Activated B cell treated with CpG ODN at 0.5 μM for 24 hours (primary cell): ENCODE measurements at regions of chr17 and their contacts with region 1.

Region 1: GRCh38 chr17:81253358-81254131 is 14.4 kb downstream of the NDUFAF8 start:
- DNase-seq: peak; percentile 35
- ATAC-seq: peak; percentile 88
- H3K4me3 Mint-ChIP-seq: no peak overlapping the region
- H3K27ac Mint-ChIP-seq: no peak overlapping the region
- H3K4me1 Mint-ChIP-seq: peaks cover 11% of the 10 kb centered on the region
- H3K27me3 Mint-ChIP-seq: no peaks in the 10 kb centered on the region
- CTCF ChIP-seq: no peak

Region 2: DNA sequence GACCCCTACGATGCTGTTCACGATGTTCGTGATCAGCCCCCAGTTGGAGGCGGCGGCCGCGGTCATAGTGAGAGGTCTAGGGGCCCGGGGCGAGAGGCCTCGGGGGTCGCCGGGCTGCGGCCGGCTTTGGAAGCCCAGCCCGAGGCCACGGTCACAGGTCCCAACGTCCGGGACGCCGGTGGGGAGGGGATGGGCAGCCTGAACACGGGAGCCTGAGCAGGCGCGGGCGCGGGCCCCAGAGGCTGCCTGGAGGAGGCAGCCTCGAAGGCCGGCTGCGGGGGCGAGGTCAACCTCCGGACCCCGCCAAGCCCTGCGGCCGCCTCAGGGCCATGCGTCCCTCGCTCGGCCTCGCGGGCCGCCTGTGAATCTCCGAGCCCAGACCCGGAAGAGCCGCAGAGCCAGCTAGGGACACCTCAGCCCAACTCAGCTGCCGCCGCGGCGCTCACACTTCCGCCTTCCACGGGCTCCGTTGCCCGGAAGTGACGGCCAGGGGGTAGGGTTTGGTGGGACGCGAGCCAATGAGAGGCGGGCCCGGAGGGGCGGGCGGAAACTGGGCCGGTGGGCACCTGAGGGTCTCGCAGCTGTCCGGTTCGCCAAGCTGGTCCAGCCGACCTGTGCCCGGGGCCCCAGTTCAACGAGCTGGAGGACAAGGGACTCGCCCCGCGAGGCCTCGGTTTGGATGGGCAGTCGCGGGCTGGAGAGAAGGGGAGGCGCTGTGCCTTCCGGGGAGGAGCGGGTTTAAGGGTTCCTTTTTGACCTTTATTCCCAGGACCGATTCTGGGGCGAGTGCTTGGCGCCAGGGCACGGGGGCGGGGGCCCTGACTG is 41.5 kb after region 1 on chr17 and contains the start of gene SLC38A10:
- CTCF ChIA-PET with region 1: interaction called, 3 read pairs
- POLR2A ChIA-PET with region 1: no interaction called
- intact Hi-C with region 1: loop called (anchors 2 kb)
- DNase-seq: peak; percentile 92
- ATAC-seq: peak; percentile 86
- H3K4me3 Mint-ChIP-seq: peak within 1 kb of the TSS; percentile 95
- H3K27ac Mint-ChIP-seq: peak within 1 kb of the TSS; percentile 92
- H3K4me1 Mint-ChIP-seq: peaks cover 39% of the 10 kb centered on the region
- H3K27me3 Mint-ChIP-seq: no peaks in the 10 kb centered on the region
- CTCF ChIP-seq: no peak
- total RNA-seq, gene SLC38A10: 75.9 and 97.1 TPM in 2 replicates

Region 3: GRCh38 chr17:81387100-81388090 is 133.8 kb after region 1 on chr17:
- CTCF ChIA-PET with region 1: no interaction called
- POLR2A ChIA-PET with region 1: no interaction called
- intact Hi-C with region 1: loop called (anchors 5 kb)
- DNase-seq: peak; percentile 39
- ATAC-seq: peak; percentile 66
- H3K4me3 Mint-ChIP-seq: peak overlapping the region; percentile 80
- H3K27ac Mint-ChIP-seq: no peak overlapping the region
- H3K4me1 Mint-ChIP-seq: no peaks in the 10 kb centered on the region
- H3K27me3 Mint-ChIP-seq: peaks cover 48% of the 10 kb centered on the region
- CTCF ChIP-seq: no peak

Region 4: GRCh38 chr17:81537343-81537855 is 283.9 kb after region 1 on chr17:
- CTCF ChIA-PET with region 1: interaction called, 5 read pairs
- POLR2A ChIA-PET with region 1: no interaction called
- intact Hi-C with region 1: loop called (anchors 1 kb)
- DNase-seq: peak; percentile 45
- ATAC-seq: peak; percentile 81
- H3K4me3 Mint-ChIP-seq: no peak overlapping the region
- H3K27ac Mint-ChIP-seq: no peak overlapping the region
- H3K4me1 Mint-ChIP-seq: peaks cover 23% of the 10 kb centered on the region
- H3K27me3 Mint-ChIP-seq: peaks cover 4% of the 10 kb centered on the region
- CTCF ChIP-seq: no peak

Region 5: GRCh38 chr17:81553018-81553615 is 299.6 kb after region 1 on chr17:
- CTCF ChIA-PET with region 1: no interaction called
- POLR2A ChIA-PET with region 1: no interaction called
- intact Hi-C with region 1: loop called (anchors 5 kb)
- DNase-seq: no peak
- ATAC-seq: peak; percentile 71
- H3K4me3 Mint-ChIP-seq: peak overlapping the region; percentile 91
- H3K27ac Mint-ChIP-seq: peak overlapping the region; percentile 92
- H3K4me1 Mint-ChIP-seq: peaks cover 45% of the 10 kb centered on the region
- H3K27me3 Mint-ChIP-seq: no peaks in the 10 kb centered on the region
- CTCF ChIP-seq: no peak

Region 6: DNA sequence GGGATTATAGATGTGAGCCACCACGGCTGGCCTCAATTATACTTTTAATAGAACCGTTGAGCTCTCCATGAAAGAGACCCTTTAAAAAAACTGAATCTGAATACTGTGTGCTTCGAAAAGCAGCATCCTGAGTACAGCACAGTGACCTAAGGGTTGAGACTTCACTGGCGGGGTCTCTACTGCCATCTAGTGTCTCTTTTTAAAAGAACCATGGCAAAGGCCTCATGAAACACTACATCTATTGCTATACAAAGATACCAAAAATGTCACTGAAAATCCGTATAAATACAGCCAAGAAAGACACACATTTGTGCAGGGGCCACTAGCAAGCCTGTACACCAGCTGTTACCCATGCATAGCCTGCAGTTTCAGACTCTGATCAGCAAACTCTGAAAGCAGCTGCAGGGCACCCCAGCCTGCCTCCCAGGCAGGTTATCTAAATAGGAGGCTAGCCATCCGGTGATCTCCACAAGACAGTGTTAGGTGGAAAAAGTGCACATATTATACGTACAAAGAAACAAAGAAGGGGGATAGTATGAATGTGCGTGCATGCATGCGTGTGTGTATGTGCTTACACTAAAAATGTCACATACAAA is 348.1 kb after region 1 on chr17:
- CTCF ChIA-PET with region 1: interaction called, 12 read pairs
- POLR2A ChIA-PET with region 1: no interaction called
- intact Hi-C with region 1: loop called (anchors 1 kb)
- DNase-seq: no peak
- ATAC-seq: peak; percentile 63
- H3K4me3 Mint-ChIP-seq: no peak overlapping the region
- H3K27ac Mint-ChIP-seq: peak overlapping the region; percentile 57
- H3K4me1 Mint-ChIP-seq: peaks cover 46% of the 10 kb centered on the region
- H3K27me3 Mint-ChIP-seq: no peaks in the 10 kb centered on the region
- CTCF ChIP-seq: peak; percentile 19